ENCODE measurements at regions of chrX and their contacts with region 1.

Region 1: GRCh38 chrX:74343343-74344279 is 39.6 kb downstream of the ZCCHC13 start:
- DNase-seq: peak; percentile 39
- ATAC-seq: peak; percentile 95
- H3K4me3 ChIP-seq: no peak overlapping the region
- H3K27ac ChIP-seq: no peak overlapping the region
- H3K4me1 ChIP-seq: no peaks in the 10 kb centered on the region
- H3K27me3 ChIP-seq: no peaks in the 10 kb centered on the region
- CTCF ChIP-seq: peak; percentile 55 to 74 (median 73)
- EP300 ChIP-seq: no peak
- POLR2A ChIP-seq: no peak
- RAD21 ChIP-seq: peak; percentile 80

Region 2: GRCh38 chrX:74015379-74016019 is 328.1 kb before region 1 on chrX:
- CTCF ChIA-PET with region 1: interaction called, 3 read pairs
- POLR2A ChIA-PET with region 1: interaction called, 4 read pairs
- RAD21 ChIA-PET with region 1: no interaction called
- SMC1A ChIA-PET with region 1: interaction called, 3 read pairs
- in situ Hi-C with region 1: no loop called
- intact Hi-C with region 1: loop called (anchors 5 kb)
- DNase-seq: peak; percentile 37
- ATAC-seq: peak; percentile 100
- H3K4me3 ChIP-seq: no peak overlapping the region
- H3K27ac ChIP-seq: no peak overlapping the region
- H3K4me1 ChIP-seq: no peaks in the 10 kb centered on the region
- H3K27me3 ChIP-seq: no peaks in the 10 kb centered on the region
- CTCF ChIP-seq: peak; percentile 76 to 97 (median 83)
- EP300 ChIP-seq: no peak
- POLR2A ChIP-seq: no peak
- RAD21 ChIP-seq: peak; percentile 99

Region 3: DNA sequence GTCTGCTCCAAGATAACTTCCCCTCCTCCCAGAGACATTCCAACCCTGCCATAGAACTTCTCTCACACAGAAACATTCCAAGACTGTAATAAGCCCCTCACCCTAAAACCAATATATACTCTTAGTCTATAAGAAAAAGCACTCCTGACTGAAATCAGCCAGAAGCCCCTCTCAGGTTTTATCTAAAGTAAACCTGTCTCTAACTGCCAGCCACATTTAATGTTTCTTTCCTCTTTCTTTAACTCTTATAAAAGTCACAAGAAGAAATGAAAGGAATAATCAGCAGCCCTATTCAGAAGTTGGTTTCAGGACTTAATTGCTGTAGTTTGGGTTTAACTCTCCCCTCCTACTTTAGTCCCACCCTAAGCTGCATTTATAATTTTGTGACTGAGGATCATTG is 204.7 kb before region 1 on chrX:
- CTCF ChIA-PET with region 1: interaction called, 3 read pairs
- POLR2A ChIA-PET with region 1: no interaction called
- RAD21 ChIA-PET with region 1: no interaction called
- SMC1A ChIA-PET with region 1: interaction called, 3 read pairs
- in situ Hi-C with region 1: no loop called
- intact Hi-C with region 1: loop called (anchors 5 kb)
- DNase-seq: no peak
- ATAC-seq: no peak
- H3K4me3 ChIP-seq: no peak overlapping the region
- H3K27ac ChIP-seq: no peak overlapping the region
- H3K4me1 ChIP-seq: no peaks in the 10 kb centered on the region
- H3K27me3 ChIP-seq: no peaks in the 10 kb centered on the region
- CTCF ChIP-seq: no peak
- EP300 ChIP-seq: no peak
- POLR2A ChIP-seq: no peak
- RAD21 ChIP-seq: no peak

Region 4: GRCh38 chrX:74232859-74233258 is 110.8 kb before region 1 on chrX:
- CTCF ChIA-PET with region 1: interaction called, 3 read pairs
- POLR2A ChIA-PET with region 1: no interaction called
- RAD21 ChIA-PET with region 1: no interaction called
- SMC1A ChIA-PET with region 1: no interaction called
- in situ Hi-C with region 1: no loop called
- intact Hi-C with region 1: loop called (anchors 5 kb)
- DNase-seq: no peak
- ATAC-seq: peak; percentile 71
- H3K4me3 ChIP-seq: no peak overlapping the region
- H3K27ac ChIP-seq: no peak overlapping the region
- H3K4me1 ChIP-seq: no peaks in the 10 kb centered on the region
- H3K27me3 ChIP-seq: no peaks in the 10 kb centered on the region
- CTCF ChIP-seq: no peak; a peak in 1 of 6 replicates
- EP300 ChIP-seq: no peak
- POLR2A ChIP-seq: no peak
- RAD21 ChIP-seq: no peak

Measured in GM12878 (cell line).